ENCODE measurements at regions of chr17 and their contacts with region 1.

Region 1: DNA sequence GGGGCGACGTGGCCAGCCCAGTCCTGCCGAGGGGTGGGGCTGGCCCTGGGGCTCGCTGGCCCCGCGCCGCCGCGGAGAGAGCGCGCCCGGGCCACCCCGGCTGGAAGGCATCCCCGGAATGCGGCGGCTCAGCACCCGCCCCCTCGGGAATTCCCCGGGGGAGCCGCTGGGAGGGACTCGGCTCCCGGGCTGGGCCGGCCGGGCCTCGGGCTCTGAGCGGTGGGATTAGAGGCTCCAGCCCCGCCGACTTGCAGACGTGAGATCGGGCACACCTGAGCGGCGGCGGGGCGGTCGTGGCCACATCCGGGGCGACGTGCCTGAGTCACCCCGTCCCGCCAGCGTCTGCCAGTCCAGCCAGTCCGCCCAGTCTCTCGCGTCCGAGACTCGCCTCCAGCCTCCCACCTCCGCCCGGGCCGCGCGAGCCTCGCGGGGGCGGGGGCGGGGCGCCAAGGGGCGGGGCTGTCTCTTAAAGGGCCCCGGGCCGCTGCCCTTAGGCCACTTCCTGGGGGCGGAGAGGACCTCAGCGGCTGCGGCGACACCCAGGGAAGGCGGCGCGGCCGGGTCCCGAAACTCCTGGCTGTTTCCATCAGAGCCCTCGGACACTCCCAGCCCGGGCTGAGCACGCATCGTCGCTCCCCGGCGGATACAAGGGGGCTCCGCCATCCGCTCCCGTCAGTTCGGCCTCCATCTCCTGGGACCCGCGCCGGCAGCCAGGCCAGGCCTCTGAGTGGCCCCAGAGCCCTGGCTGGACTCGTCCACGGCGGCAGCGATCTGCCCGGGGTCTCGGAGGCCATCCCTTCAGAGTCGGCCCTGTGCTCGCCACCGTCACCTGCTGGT is at the start of gene KCTD11:
- DNase-seq: peak; percentile 87
- H3K4me3 ChIP-seq: peak within 1 kb of the TSS; percentile 93
- H3K27ac ChIP-seq: peak within 1 kb of the TSS; percentile 94
- H3K4me1 ChIP-seq: peaks cover 38% of the 10 kb centered on the region
- H3K27me3 ChIP-seq: no peaks in the 10 kb centered on the region
- CTCF ChIP-seq: 0 out of 2 replicates have a peak, but pooled peaks have one; percentile 56
- total RNA-seq, gene KCTD11: 3.8 TPM in 2 replicates

Region 2: GRCh38 chr17:7045909-7046724 is 305.8 kb before region 1 on chr17:
- CTCF ChIA-PET with region 1: no interaction called
- POLR2A ChIA-PET with region 1: no interaction called
- intact Hi-C with region 1: loop called (anchors 5 kb)
- DNase-seq: peak; percentile 86
- H3K4me3 ChIP-seq: peak overlapping the region; percentile 9
- H3K27ac ChIP-seq: no peak overlapping the region
- H3K4me1 ChIP-seq: peaks cover 20% of the 10 kb centered on the region
- H3K27me3 ChIP-seq: no peaks in the 10 kb centered on the region
- CTCF ChIP-seq: peak; percentile 89

Region 3: GRCh38 chr17:7214300-7215135 is 137.4 kb before region 1 on chr17:
- CTCF ChIA-PET with region 1: no interaction called
- POLR2A ChIA-PET with region 1: no interaction called
- intact Hi-C with region 1: no loop called
- DNase-seq: peak; percentile 99
- H3K4me3 ChIP-seq: peak overlapping the region; percentile 73
- H3K27ac ChIP-seq: peak overlapping the region; percentile 79
- H3K4me1 ChIP-seq: peaks cover 50% of the 10 kb centered on the region
- H3K27me3 ChIP-seq: no peaks in the 10 kb centered on the region
- CTCF ChIP-seq: peak; percentile 66

Region 4: GRCh38 chr17:7296189-7296902 is 55.5 kb before region 1 on chr17:
- CTCF ChIA-PET with region 1: no interaction called
- POLR2A ChIA-PET with region 1: no interaction called
- intact Hi-C with region 1: loop called (anchors 5 kb)
- DNase-seq: peak; percentile 85
- H3K4me3 ChIP-seq: peak overlapping the region; percentile 24
- H3K27ac ChIP-seq: no peak overlapping the region
- H3K4me1 ChIP-seq: peaks cover 22% of the 10 kb centered on the region
- H3K27me3 ChIP-seq: no peaks in the 10 kb centered on the region
- CTCF ChIP-seq: peak; percentile 94

Region 5: GRCh38 chr17:7435221-7435675 is 83.4 kb after region 1 on chr17 and contains the start of gene TMEM102:
- CTCF ChIA-PET with region 1: interaction called, 5 read pairs
- POLR2A ChIA-PET with region 1: no interaction called
- intact Hi-C with region 1: loop called (anchors 5 kb)
- DNase-seq: peak; percentile 99
- H3K4me3 ChIP-seq: peak within 1 kb of the TSS; percentile 90
- H3K27ac ChIP-seq: peak within 1 kb of the TSS; percentile 41
- H3K4me1 ChIP-seq: peaks cover 30% of the 10 kb centered on the region
- H3K27me3 ChIP-seq: no peaks in the 10 kb centered on the region
- CTCF ChIP-seq: no peak
- total RNA-seq, gene TMEM102: 3.2 and 4.7 TPM in 2 replicates

Region 6: DNA sequence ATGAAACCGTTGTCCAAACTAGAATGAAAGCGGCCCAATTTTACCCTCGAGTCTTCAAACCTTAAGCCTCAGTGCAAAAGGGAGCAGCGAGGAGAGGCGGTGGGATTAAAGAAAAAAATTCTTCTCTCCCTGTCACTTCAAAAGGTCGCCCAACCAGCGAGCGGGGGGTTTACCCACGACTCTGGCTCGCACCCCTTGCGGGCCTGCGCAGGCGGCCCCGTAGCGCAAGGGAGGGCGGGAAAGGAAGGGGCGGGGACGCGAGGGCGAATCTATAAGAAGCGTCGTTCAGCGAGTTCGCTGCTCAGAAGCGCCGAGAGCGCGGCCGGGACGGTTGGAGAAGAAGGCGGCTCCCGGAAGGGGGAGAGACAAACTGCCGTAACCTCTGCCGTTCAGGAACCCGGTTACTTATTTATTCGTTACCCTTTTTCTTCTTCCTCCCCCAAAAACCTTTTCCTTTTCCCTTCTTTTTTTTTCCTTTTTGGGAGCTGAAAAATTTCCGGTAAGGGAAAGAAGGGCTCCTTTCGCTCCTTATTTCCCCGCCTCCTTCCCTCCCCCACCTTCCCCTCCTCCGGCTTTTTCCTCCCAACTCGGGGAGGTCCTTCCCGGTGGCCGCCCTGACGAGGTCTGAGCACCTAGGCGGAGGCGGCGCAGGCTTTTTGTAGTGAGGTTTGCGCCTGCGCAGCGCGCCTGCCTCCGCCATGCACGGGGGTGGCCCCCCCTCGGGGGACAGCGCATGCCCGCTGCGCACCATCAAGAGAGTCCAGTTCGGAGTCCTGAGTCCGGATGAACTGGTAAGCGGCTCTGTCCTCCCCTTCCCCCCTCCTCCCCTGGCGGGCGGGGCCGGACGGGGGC is 132.4 kb after region 1 on chr17 and contains the start of gene POLR2A:
- CTCF ChIA-PET with region 1: interaction called, 3 read pairs
- POLR2A ChIA-PET with region 1: no interaction called
- intact Hi-C with region 1: loop called (anchors 10 kb)
- DNase-seq: peak; percentile 98
- H3K4me3 ChIP-seq: peak within 1 kb of the TSS; percentile 91
- H3K27ac ChIP-seq: peak within 1 kb of the TSS; percentile 100
- H3K4me1 ChIP-seq: peaks cover 39% of the 10 kb centered on the region
- H3K27me3 ChIP-seq: no peaks in the 10 kb centered on the region
- CTCF ChIP-seq: 0 out of 2 replicates have a peak, but pooled peaks have one; percentile 14
- total RNA-seq, gene POLR2A: 330 and 341 TPM in 2 replicates

Region 7: DNA sequence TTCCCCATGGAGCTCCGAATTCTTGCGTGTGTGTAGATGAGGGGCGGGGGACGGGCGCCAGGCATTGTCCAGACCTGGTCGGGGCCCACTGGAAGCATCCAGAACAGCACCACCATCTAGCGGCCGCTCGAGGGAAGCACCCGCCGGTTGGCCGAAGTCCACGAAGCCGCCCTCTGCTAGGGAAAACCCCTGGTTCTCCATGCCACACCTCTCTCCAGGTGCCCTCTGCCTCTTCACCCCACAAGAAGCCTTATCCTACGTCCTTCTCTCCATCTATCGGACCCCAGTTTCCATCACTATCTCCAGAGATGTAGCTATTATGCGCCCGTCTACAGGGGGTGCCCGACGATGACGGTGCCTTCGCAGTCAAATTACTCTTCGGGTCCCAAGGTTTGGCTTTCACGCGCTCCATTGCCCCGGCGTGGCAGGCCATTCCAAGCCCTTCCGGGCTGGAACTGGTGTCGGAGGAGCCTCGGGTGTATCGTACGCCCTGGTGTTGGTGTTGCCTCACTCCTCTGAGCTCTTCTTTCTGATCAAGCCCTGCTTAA is 209.2 kb after region 1 on chr17:
- CTCF ChIA-PET with region 1: interaction called, 11 read pairs
- POLR2A ChIA-PET with region 1: no interaction called
- intact Hi-C with region 1: loop called (anchors 2 kb)
- DNase-seq: peak; percentile 93
- H3K4me3 ChIP-seq: peak overlapping the region; percentile 90
- H3K27ac ChIP-seq: peak overlapping the region; percentile 92
- H3K4me1 ChIP-seq: peaks cover 33% of the 10 kb centered on the region
- H3K27me3 ChIP-seq: no peaks in the 10 kb centered on the region
- CTCF ChIP-seq: peak; percentile 86

Measured in A673 (cell line).